ENCODE measurements at regions of chr3 and their contacts with region 1.

Region 1: GRCh38 chr3:185942907-185943759 is 5.3 kb upstream of the TRA2B start:
- DNase-seq: peak; percentile 81 to 90 (median 87)
- H3K4me3 ChIP-seq: peak overlapping the region in 6 of 7 experiments; percentile 25 to 67 (median 46)
- H3K27ac ChIP-seq: no peak overlapping the region
- H3K4me1 ChIP-seq: peaks cover 4 to 13% (median 10%) of the 10 kb centered on the region in 4 experiments
- H3K27me3 ChIP-seq: no peaks in the 10 kb centered on the region

Region 2: DNA sequence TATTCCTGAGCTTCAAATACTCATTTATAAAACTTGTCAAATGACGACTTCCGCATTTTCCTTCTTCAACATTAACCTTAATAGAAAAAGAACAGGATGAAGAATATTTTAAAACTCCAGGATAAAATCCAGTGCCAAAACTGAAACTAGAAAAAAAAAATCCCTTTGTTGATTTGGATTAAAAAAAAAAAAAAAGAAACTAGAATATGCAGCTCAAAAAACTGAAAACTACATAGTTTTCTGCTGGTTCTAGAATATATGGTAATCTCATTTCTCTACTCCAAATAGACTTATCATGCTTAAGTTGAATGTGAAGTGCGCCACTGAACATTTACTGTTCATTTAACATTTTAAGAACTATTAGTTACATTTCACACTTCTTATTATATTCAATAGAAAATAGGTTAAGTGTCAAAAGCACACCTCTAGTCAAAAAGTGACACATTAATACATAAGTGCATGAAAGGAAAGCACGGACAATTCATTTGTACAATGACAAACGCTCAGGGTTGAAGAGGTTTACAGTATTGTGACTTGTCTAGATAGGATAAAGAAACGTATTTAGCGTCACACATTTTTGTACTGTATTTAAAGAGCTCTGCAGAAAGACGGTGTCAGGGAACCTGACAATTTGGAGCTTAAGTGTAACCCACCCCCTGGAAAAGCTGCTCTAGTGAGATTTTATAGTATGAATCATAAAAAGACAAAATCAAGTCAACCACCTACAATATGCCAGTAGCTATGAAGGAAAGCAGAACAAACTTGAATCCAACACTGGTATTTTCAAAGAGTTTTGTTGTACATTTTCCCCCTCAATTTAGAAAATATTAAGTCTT is 11.1 kb before region 1 on chr3:
- CTCF ChIA-PET with region 1: interaction called, 18 read pairs
- POLR2A ChIA-PET with region 1: interaction called, 8 read pairs
- DNase-seq: peak in 2 of 3 donors; percentile 46 to 48
- H3K4me3 ChIP-seq: peak overlapping the region in 6 of 7 experiments; percentile 41 to 100 (median 83)
- H3K27ac ChIP-seq: peak overlapping the region in 1 of 2 experiments; percentile 21
- H3K4me1 ChIP-seq: peaks cover 57 to 87% (median 80%) of the 10 kb centered on the region in 4 experiments
- H3K27me3 ChIP-seq: no peaks in the 10 kb centered on the region

Region 3: GRCh38 chr3:185959609-185960517 is 16.7 kb after region 1 on chr3:
- CTCF ChIA-PET with region 1: interaction called, 36 read pairs
- POLR2A ChIA-PET with region 1: interaction called, 3 read pairs
- DNase-seq: peak; percentile 76 to 88 (median 87)
- H3K4me3 ChIP-seq: peak overlapping the region in 6 of 7 experiments; percentile 30 to 74 (median 48)
- H3K27ac ChIP-seq: peak overlapping the region; percentile 46 to 70
- H3K4me1 ChIP-seq: peaks cover 0 to 19% (median 9%) of the 10 kb centered on the region in 4 experiments
- H3K27me3 ChIP-seq: no peaks in the 10 kb centered on the region

Region 4: DNA sequence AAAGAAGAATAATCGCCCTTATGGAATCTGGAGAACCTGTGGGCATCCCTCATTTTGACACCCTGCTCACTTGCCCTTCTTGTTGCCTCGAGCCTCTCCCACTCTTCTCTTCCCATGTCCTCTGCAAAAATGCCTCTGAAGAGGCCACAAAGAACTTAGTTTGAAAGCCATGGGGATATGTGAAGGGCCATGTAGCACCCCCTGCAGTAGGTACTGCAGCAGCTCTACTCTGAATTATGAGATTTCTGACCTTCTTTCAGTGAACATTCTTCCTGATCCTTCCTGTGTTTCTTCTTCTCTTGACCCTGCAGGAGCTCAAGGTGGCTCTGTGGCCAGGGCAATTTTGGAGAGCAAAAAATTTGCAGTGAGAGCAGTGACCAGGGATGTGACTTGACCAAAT is 25.0 kb after region 1 on chr3:
- CTCF ChIA-PET with region 1: interaction called, 46 read pairs
- POLR2A ChIA-PET with region 1: no interaction called
- DNase-seq: no peak
- H3K4me3 ChIP-seq: no peak overlapping the region
- H3K27ac ChIP-seq: no peak overlapping the region
- H3K4me1 ChIP-seq: no peaks in the 10 kb centered on the region
- H3K27me3 ChIP-seq: no peaks in the 10 kb centered on the region

Region 5: GRCh38 chr3:185976977-185977678 is 34.0 kb after region 1 on chr3:
- CTCF ChIA-PET with region 1: interaction called, 15 read pairs
- POLR2A ChIA-PET with region 1: no interaction called
- DNase-seq: peak; percentile 78 to 89 (median 83)
- H3K4me3 ChIP-seq: no peak overlapping the region
- H3K27ac ChIP-seq: no peak overlapping the region
- H3K4me1 ChIP-seq: peaks cover 0 to 10% (median 4%) of the 10 kb centered on the region in 4 experiments
- H3K27me3 ChIP-seq: no peaks in the 10 kb centered on the region